PC-3 (cell line): ENCODE measurements at regions of chr3 and their contacts with region 1.

Region 1: DNA sequence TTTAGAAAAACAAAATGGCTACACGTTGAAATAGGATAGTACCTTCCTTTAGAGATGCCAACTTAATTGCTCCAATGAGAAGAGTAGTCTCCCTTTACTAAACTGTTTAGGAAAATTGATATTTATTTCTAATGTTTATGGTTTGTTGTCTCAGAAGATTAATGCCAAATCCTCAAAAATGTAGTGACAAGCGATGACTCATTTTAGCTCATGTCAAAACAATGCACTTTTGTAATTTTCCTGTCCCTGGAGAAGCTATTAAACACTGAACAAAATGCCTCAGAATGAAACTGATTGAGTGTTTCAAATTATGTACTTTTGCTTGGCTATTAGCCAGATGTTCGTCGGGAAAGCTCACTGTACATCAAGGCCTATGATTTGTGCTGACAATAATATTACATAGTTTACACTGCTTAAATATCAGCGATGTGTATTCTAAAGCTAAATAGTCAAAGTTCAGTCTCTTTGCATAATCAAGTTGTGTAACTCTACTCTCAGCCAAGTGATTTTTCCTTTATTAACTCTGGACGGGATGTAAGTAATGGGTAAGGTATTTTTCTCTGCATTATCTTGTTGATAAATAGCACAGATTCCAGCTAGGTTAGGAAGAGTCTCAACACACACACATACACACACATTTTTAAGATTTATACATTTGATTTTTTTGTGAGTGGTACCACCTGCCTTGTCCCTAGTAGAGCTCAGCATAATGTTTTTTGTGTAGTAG is 83.7 kb downstream of the CMSS1 start:
- DNase-seq: peak; percentile 98
- ATAC-seq: peak; percentile 82
- H3K4me3 ChIP-seq: peak overlapping the region; percentile 37
- H3K27ac ChIP-seq: peak overlapping the region; percentile 82
- H3K4me1 ChIP-seq: peaks cover 47% of the 10 kb centered on the region
- H3K27me3 ChIP-seq: no peaks in the 10 kb centered on the region
- CTCF ChIP-seq: no peak

Region 2: GRCh38 chr3:99859825-99860224 is 41.5 kb before region 1 on chr3:
- CTCF ChIA-PET with region 1: no interaction called
- POLR2A ChIA-PET with region 1: no interaction called
- intact Hi-C with region 1: loop called (anchors 1 kb)
- DNase-seq: peak; percentile 93
- ATAC-seq: peak; percentile 70
- H3K4me3 ChIP-seq: no peak overlapping the region
- H3K27ac ChIP-seq: peak overlapping the region; percentile 49
- H3K4me1 ChIP-seq: peaks cover 49% of the 10 kb centered on the region
- H3K27me3 ChIP-seq: no peaks in the 10 kb centered on the region
- CTCF ChIP-seq: no peak

Region 3: DNA sequence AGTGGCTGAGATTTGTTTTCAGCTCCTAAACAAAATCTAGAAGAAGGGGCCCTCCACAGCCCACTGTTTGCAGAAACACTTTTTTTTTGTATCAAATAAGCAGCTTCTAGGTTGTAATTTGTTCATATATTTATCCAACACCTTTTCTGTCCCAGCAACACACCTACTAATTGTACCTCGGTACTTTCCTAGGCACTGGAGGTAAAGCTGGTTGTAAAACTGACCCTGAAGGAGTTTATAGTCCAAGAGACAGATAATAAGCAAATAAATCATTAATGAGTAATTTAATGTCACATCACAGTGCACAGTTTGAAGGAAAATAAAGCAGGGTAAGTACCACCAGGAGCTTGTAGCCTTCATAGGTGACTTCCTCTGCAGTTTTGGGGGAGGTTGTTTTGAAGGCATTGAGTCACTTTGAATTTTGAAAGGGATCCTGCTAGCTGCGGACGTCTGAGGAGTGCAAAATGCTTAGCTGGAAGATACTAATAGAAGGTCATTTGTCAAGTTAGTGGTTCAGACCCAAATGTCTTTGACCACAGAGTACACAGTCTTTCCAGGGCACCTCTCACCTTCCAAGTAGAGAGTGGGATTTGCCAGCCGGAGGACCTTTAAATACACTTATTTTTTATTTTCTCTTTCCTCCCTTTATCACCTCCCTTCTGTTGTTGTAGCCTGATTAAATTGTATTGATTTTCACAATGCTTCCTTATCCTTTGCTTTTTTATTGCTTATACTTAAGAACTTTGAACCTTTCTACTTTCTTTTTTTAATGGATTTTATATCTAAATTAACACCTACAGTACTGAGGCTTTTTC is 29.9 kb before region 1 on chr3:
- CTCF ChIA-PET with region 1: no interaction called
- POLR2A ChIA-PET with region 1: no interaction called
- intact Hi-C with region 1: no loop called
- DNase-seq: no peak
- ATAC-seq: no peak
- H3K4me3 ChIP-seq: no peak overlapping the region
- H3K27ac ChIP-seq: no peak overlapping the region
- H3K4me1 ChIP-seq: peaks cover 21% of the 10 kb centered on the region
- H3K27me3 ChIP-seq: no peaks in the 10 kb centered on the region
- CTCF ChIP-seq: no peak

Region 4: GRCh38 chr3:100042166-100042981 is 141.0 kb after region 1 on chr3:
- CTCF ChIA-PET with region 1: no interaction called
- POLR2A ChIA-PET with region 1: interaction called, 7 read pairs
- intact Hi-C with region 1: loop called (anchors 1 kb)
- DNase-seq: peak; percentile 97
- ATAC-seq: peak; percentile 71
- H3K4me3 ChIP-seq: peak overlapping the region; percentile 41
- H3K27ac ChIP-seq: peak overlapping the region; percentile 86
- H3K4me1 ChIP-seq: peaks cover 57% of the 10 kb centered on the region
- H3K27me3 ChIP-seq: no peaks in the 10 kb centered on the region
- CTCF ChIP-seq: no peak

Region 5: DNA sequence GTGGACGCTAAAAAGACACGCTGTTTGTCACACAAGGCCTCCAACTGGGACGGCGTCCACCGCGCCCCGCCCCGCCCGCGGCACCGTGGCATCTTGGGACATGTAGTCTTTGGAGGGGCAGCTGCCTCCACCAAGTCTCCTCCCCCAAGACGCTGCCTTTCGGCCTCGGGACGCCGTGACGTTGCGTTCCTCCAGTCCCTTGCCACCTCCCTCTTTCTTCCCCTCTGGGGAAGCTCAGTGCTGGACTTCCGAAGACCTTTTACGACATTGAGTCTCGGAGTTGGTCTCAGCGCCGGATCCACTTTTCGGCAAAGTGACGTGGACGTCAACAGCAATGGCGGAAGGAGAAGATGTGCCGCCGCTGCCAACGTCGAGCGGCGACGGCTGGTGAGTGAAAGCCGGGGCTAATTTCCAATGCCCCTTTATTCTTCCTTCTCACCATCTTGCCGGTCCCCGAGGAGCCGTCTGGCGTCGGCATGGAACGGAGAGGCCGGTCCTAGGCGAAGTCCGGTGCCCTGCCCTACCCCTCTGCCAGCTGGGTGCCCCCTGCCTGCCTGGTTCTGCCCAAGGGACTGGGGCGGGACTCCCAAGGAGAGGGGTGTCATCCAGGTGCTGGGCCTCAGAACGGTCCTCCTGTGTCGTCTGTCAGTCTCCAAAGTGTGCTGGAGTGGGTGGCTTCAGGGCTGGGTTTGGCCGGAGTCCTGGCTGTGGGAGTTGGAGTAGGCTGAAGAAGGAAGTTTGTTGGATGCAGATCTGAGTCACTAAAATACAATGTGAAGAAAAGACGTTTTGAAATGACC is 359.5 kb after region 1 on chr3 and contains the start of gene TBC1D23:
- CTCF ChIA-PET with region 1: no interaction called
- POLR2A ChIA-PET with region 1: no interaction called
- intact Hi-C with region 1: loop called (anchors 5 kb)
- DNase-seq: peak; percentile 100
- ATAC-seq: peak; percentile 99
- H3K4me3 ChIP-seq: peak within 1 kb of the TSS; percentile 88
- H3K27ac ChIP-seq: peak within 1 kb of the TSS; percentile 70
- H3K4me1 ChIP-seq: peaks cover 46% of the 10 kb centered on the region
- H3K27me3 ChIP-seq: no peaks in the 10 kb centered on the region
- CTCF ChIP-seq: no peak
- total RNA-seq, gene TBC1D23: 25.6 and 37.9 TPM in 2 replicates